PC-3 (cell line): ENCODE measurements at regions of chr9 and their contacts with region 1.

Region 1: GRCh38 chr9:18393340-18394130 is 80.4 kb upstream of the ADAMTSL1 start:
- DNase-seq: peak; percentile 92
- ATAC-seq: peak; percentile 91
- H3K4me3 ChIP-seq: peak overlapping the region; percentile 12; the same call in 1 of the 2 replicates
- H3K27ac ChIP-seq: peak overlapping the region; percentile 98
- H3K4me1 ChIP-seq: peaks cover 28% of the 10 kb centered on the region
- H3K27me3 ChIP-seq: no peaks in the 10 kb centered on the region
- CTCF ChIP-seq: no peak

Region 2: GRCh38 chr9:18238254-18238653 is 155.3 kb before region 1 on chr9:
- CTCF ChIA-PET with region 1: no interaction called
- POLR2A ChIA-PET with region 1: no interaction called
- intact Hi-C with region 1: loop called (anchors 1 kb)
- DNase-seq: peak; percentile 86
- ATAC-seq: peak; percentile 86
- H3K4me3 ChIP-seq: peak overlapping the region; percentile 51
- H3K27ac ChIP-seq: peak overlapping the region; percentile 99
- H3K4me1 ChIP-seq: peaks cover 55% of the 10 kb centered on the region
- H3K27me3 ChIP-seq: no peaks in the 10 kb centered on the region
- CTCF ChIP-seq: no peak

Region 3: DNA sequence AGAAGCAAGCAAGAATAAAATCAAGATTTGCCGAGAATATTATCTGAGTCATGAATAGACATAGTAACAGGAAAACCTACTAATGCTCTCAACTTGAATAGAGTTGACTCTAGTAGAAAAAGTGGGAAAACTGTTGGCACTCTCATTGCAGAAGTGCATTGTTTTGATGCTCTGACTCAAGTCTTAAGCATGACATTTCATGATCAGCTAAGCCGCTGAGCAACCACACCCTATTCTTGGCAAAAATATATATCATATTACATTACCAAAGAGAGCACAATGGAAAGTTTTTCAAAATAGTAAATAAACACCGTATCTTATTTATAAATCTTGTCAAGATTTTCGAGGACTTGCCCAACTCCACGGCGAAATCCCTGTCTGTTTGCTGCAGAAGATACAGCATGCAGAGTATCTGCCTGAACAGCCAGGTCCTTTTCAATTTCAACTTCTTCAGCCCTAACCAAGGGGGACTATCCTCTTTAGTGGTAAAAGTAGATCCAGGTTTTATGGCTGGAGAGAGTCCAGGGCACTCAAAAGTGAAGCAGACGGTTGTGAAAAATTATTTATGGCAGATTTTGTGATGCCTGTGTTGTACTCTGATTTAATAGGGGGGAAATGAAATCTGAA is 66.5 kb after region 1 on chr9:
- CTCF ChIA-PET with region 1: no interaction called
- POLR2A ChIA-PET with region 1: no interaction called
- intact Hi-C with region 1: loop called (anchors 1 kb)
- DNase-seq: peak; percentile 94
- ATAC-seq: peak; percentile 85
- H3K4me3 ChIP-seq: peak overlapping the region; percentile 51; the same call in 1 of the 2 replicates
- H3K27ac ChIP-seq: peak overlapping the region; percentile 89
- H3K4me1 ChIP-seq: peaks cover 60% of the 10 kb centered on the region
- H3K27me3 ChIP-seq: no peaks in the 10 kb centered on the region
- CTCF ChIP-seq: no peak

Region 4: DNA sequence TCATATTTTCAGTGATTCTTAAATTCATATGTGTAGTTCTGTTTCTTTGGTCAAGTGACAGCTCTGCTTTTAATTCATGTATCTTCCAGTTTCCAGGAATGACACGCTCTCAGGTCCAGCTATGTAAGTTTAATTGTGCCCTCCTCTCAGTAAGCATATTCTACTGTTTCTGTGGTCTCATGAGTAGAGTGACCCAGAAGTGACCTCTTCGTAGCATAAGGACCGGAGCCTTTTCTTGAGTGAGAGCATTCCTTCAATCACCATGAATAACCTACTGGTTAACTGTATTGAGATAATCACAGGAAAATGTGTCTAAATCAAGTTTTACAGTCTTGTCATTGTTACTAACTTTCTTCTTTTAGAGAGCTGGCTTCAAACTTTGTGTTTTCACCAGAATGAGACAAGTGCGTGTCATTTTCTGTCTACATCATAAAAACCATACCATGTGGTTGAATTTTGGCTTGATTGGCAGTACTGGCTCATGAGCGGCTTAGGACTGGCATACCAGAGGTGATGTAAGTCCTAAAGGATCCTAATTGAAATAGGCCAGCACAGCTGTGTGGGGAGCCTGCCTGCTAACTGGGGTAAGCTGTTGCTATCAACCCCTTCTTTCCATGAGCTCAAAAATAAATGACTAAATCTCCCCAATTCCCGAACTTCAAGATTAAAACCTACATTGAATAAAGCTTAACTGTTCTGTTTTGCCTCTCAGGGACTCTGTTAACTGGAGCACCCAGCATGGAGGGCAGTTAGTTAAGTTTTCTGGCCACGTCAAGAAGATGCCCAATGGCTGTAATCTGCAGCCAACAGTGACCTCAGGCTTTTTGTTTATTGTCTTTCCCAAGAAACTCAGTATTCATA is 85.2 kb after region 1 on chr9:
- CTCF ChIA-PET with region 1: no interaction called
- POLR2A ChIA-PET with region 1: no interaction called
- intact Hi-C with region 1: loop called (anchors 5 kb)
- DNase-seq: peak; percentile 90
- ATAC-seq: peak; percentile 71
- H3K4me3 ChIP-seq: no peak overlapping the region
- H3K27ac ChIP-seq: peak overlapping the region; percentile 98
- H3K4me1 ChIP-seq: peaks cover 75% of the 10 kb centered on the region
- H3K27me3 ChIP-seq: no peaks in the 10 kb centered on the region
- CTCF ChIP-seq: no peak

Region 5: DNA sequence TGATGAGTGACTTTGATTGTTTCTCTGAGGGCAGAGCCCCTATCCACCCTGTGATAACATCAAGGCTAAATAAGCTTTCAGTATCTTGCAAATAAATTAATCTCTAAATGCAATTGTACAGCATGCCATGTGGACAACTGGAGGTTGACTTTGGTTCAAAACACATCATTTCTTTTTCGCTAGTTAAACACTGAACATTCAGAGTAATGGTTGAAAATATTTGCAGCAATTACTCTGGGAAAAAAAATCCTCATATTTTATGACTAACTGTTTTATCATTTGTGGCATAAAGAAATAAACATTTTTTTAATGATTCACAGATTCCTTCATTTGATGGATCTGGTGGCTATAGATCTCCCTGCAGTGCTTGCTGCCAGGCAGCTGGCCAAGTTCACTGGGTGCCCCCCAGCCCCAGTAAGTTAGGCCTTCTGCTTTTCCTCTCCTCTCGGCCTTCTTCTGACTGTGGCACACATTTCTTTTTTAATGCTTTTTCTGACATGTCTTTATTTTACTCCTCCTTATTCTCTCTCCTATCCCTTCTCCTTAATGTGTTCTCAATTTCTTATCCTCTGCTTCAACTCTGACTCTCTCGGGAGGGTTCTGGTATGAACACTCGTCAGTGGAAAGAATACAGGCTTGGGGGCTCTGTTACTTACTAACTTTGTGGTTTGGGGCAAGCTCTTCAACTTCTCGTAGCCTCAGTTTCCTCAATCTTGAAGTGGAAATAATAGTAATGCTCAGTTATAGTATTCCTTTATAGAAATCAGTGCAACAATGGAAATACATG is 150.1 kb after region 1 on chr9:
- CTCF ChIA-PET with region 1: no interaction called
- POLR2A ChIA-PET with region 1: no interaction called
- intact Hi-C with region 1: loop called (anchors 10 kb)
- DNase-seq: peak; percentile 81
- ATAC-seq: peak; percentile 73
- H3K4me3 ChIP-seq: no peak overlapping the region
- H3K27ac ChIP-seq: peak overlapping the region; percentile 95
- H3K4me1 ChIP-seq: peaks cover 34% of the 10 kb centered on the region
- H3K27me3 ChIP-seq: no peaks in the 10 kb centered on the region
- CTCF ChIP-seq: no peak

Region 6: GRCh38 chr9:18658764-18659705 is 265.5 kb after region 1 on chr9:
- CTCF ChIA-PET with region 1: no interaction called
- POLR2A ChIA-PET with region 1: no interaction called
- intact Hi-C with region 1: loop called (anchors 10 kb)
- DNase-seq: peak; percentile 78
- ATAC-seq: peak; percentile 35
- H3K4me3 ChIP-seq: no peak overlapping the region
- H3K27ac ChIP-seq: peak overlapping the region; percentile 30; the same call in 1 of the 2 replicates
- H3K4me1 ChIP-seq: peaks cover 16% of the 10 kb centered on the region
- H3K27me3 ChIP-seq: no peaks in the 10 kb centered on the region
- CTCF ChIP-seq: no peak

Region 7: GRCh38 chr9:18824095-18824666 is 430.6 kb after region 1 on chr9:
- CTCF ChIA-PET with region 1: no interaction called
- POLR2A ChIA-PET with region 1: no interaction called
- intact Hi-C with region 1: loop called (anchors 2 kb)
- DNase-seq: peak; percentile 66
- ATAC-seq: peak; percentile 52; the same call in 1 of the 2 replicates
- H3K4me3 ChIP-seq: no peak overlapping the region
- H3K27ac ChIP-seq: no peak overlapping the region
- H3K4me1 ChIP-seq: peaks cover 21% of the 10 kb centered on the region
- H3K27me3 ChIP-seq: no peaks in the 10 kb centered on the region
- CTCF ChIP-seq: peak; percentile 71